Activated naive CD4-positive, alpha-beta T cell treated with anti-CD3 and anti-CD28 coated beads for 36 hours (primary cell): ENCODE measurements at regions of chr2 and their contacts with region 1.

Region 1: GRCh38 chr2:127649684-127650040 is 3.7 kb downstream of the GPR17 start:
- DNase-seq: peak; percentile 91
- H3K4me3 Mint-ChIP-seq: no peak overlapping the region
- H3K27ac Mint-ChIP-seq: no peak overlapping the region
- H3K4me1 Mint-ChIP-seq: peaks cover 13% of the 10 kb centered on the region
- H3K27me3 Mint-ChIP-seq: no peaks in the 10 kb centered on the region

Region 2: GRCh38 chr2:127197475-127198385 is 451.9 kb before region 1 on chr2:
- CTCF ChIA-PET with region 1: no interaction called
- intact Hi-C with region 1: loop called (anchors 1 kb)
- DNase-seq: peak; percentile 80
- H3K4me3 Mint-ChIP-seq: peak overlapping the region; percentile 69
- H3K27ac Mint-ChIP-seq: no peak overlapping the region
- H3K4me1 Mint-ChIP-seq: peaks cover 5% of the 10 kb centered on the region
- H3K27me3 Mint-ChIP-seq: no peaks in the 10 kb centered on the region

Region 3: GRCh38 chr2:127324635-127325034 is 325.0 kb before region 1 on chr2:
- CTCF ChIA-PET with region 1: no interaction called
- intact Hi-C with region 1: loop called (anchors 10 kb)
- DNase-seq: no peak
- H3K4me3 Mint-ChIP-seq: no peak overlapping the region
- H3K27ac Mint-ChIP-seq: no peak overlapping the region
- H3K4me1 Mint-ChIP-seq: peaks cover 6% of the 10 kb centered on the region
- H3K27me3 Mint-ChIP-seq: no peaks in the 10 kb centered on the region

Region 4: DNA sequence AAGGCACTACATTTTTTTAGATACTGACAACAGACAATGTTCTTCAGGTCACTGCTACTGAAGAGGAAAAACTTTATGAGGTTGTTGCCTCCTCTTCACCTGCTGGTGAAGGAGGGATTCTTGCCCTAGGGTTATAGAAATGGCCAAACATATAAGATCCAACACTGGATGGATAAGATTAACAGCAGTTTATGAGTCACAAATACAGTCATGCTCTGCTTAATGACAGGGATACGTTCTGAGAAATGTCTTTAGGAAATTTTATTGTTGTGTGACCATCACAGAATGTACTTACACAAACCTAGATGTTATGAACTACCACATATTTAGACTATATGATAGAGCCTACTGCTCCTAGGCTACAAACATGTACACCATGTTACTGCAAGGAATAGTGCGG is 293.5 kb after region 1 on chr2:
- CTCF ChIA-PET with region 1: no interaction called
- intact Hi-C with region 1: no loop called
- DNase-seq: no peak
- H3K4me3 Mint-ChIP-seq: no peak overlapping the region
- H3K27ac Mint-ChIP-seq: no peak overlapping the region
- H3K4me1 Mint-ChIP-seq: no peaks in the 10 kb centered on the region
- H3K27me3 Mint-ChIP-seq: no peaks in the 10 kb centered on the region

Region 5: GRCh38 chr2:129050101-129050500 is 1400.4 kb after region 1 on chr2:
- CTCF ChIA-PET with region 1: no interaction called
- intact Hi-C with region 1: no loop called
- DNase-seq: no peak
- H3K4me3 Mint-ChIP-seq: no peak overlapping the region
- H3K27ac Mint-ChIP-seq: no peak overlapping the region
- H3K4me1 Mint-ChIP-seq: no peaks in the 10 kb centered on the region
- H3K27me3 Mint-ChIP-seq: peaks cover 3% of the 10 kb centered on the region